ENCODE measurements at regions of chr19 and their contacts with region 1.

Region 1: DNA sequence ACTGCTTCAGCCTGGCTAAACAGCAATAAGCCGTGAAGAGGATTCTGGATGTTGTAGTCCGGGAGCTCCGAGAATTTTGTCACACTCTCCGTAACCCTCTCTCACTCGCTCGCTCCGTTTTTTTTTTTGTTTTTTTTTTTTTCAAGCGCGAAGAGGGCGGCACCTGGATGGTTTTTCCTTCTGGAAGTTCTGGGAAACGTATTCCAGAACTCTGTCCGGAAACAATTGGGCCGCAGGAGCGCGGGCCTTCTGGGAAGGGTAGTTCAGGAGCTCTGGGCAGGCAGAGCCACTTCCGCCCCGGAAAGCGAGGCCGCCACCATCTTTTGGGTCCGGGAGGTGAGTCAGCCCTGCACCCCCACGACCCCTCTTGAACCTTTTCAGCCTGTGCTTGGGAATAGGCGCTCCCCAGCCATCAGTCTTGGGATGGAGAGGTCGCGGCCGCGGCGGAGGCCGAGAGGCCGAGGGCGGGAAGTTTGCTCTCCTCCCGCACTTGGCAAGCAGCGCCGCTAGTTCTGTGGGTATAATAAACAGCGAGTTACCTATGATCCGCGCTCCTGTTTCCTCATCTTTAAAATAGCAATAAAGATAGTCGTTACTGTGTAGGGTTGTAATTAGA is at the start of gene ZNF227:
- DNase-seq: peak; percentile 69
- ATAC-seq: peak; percentile 93
- H3K4me3 Mint-ChIP-seq: peak within 1 kb of the TSS; percentile 95
- H3K27ac Mint-ChIP-seq: peak within 1 kb of the TSS; percentile 89
- H3K4me1 Mint-ChIP-seq: peaks cover 20% of the 10 kb centered on the region
- H3K27me3 Mint-ChIP-seq: no peaks in the 10 kb centered on the region
- CTCF ChIP-seq: no peak
- total RNA-seq, gene ZNF227: 33.1 and 36.9 TPM in 2 replicates

Region 2: GRCh38 chr19:43619262-43620060 is 592.9 kb before region 1 on chr19 and contains the start of gene ZNF428:
- CTCF ChIA-PET with region 1: no interaction called
- POLR2A ChIA-PET with region 1: no interaction called
- intact Hi-C with region 1: loop called (anchors 2 kb)
- DNase-seq: peak; percentile 83
- ATAC-seq: peak; percentile 87
- H3K4me3 Mint-ChIP-seq: peak within 1 kb of the TSS; percentile 94
- H3K27ac Mint-ChIP-seq: peak within 1 kb of the TSS; percentile 96
- H3K4me1 Mint-ChIP-seq: peaks cover 21% of the 10 kb centered on the region
- H3K27me3 Mint-ChIP-seq: no peaks in the 10 kb centered on the region
- CTCF ChIP-seq: no peak
- total RNA-seq, gene ZNF428: 26.2 and 29.1 TPM in 2 replicates

Region 3: GRCh38 chr19:44304659-44305193 is 92.4 kb after region 1 on chr19 and contains the start of gene ZNF235:
- CTCF ChIA-PET with region 1: no interaction called
- POLR2A ChIA-PET with region 1: interaction called, 23 read pairs
- intact Hi-C with region 1: loop called (anchors 1 kb)
- DNase-seq: peak; percentile 61
- ATAC-seq: peak; percentile 97
- H3K4me3 Mint-ChIP-seq: peak within 1 kb of the TSS; percentile 96
- H3K27ac Mint-ChIP-seq: peak within 1 kb of the TSS; percentile 76
- H3K4me1 Mint-ChIP-seq: peaks cover 20% of the 10 kb centered on the region
- H3K27me3 Mint-ChIP-seq: peaks cover 7% of the 10 kb centered on the region
- CTCF ChIP-seq: no peak
- total RNA-seq, gene ZNF235: 11.6 and 14.5 TPM in 2 replicates

Region 4: DNA sequence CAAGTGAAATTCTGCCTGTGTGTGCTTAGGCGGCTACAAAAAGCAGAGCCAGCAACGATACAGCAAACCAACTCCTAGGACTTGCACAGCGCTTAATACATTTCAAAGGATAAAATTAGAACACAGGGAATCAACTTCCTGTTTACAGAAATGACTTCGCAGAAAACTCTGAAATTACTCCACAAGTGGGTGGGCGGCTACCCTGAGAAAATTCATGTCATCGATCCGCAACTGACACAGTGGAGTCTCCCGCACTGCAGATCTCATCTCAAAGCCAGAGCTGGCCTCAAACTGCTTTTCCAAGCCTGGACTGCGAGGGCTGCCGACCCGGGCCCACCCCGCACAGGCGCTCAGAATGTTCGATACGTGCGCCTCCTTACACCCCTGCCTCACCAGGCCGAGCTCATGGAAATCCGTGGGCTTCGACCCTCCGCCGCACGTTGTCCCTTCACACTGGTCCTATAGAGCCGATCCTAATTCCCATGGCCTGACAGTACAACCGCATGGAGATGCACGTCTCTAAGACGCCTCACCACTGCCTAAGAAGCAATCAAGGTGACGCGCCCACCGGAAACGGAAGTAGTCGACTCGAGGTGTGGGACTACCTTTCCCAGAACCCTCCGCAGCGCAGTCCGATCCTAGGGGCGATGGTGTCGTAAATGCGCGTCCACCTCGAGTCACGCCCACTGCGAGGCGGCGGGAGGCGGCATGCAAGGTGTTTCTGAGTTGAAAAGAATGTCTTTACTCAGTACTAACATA is 235.7 kb after region 1 on chr19 and contains the start of gene ZNF229:
- CTCF ChIA-PET with region 1: no interaction called
- POLR2A ChIA-PET with region 1: interaction called, 3 read pairs
- intact Hi-C with region 1: loop called (anchors 5 kb)
- DNase-seq: peak; percentile 69
- ATAC-seq: peak; percentile 99
- H3K4me3 Mint-ChIP-seq: peak within 1 kb of the TSS; percentile 87
- H3K27ac Mint-ChIP-seq: peak within 1 kb of the TSS; percentile 79
- H3K4me1 Mint-ChIP-seq: peaks cover 12% of the 10 kb centered on the region
- H3K27me3 Mint-ChIP-seq: peaks cover 21% of the 10 kb centered on the region
- CTCF ChIP-seq: no peak
- total RNA-seq, gene ZNF229: 3.1 and 3.7 TPM in 2 replicates

Region 5: DNA sequence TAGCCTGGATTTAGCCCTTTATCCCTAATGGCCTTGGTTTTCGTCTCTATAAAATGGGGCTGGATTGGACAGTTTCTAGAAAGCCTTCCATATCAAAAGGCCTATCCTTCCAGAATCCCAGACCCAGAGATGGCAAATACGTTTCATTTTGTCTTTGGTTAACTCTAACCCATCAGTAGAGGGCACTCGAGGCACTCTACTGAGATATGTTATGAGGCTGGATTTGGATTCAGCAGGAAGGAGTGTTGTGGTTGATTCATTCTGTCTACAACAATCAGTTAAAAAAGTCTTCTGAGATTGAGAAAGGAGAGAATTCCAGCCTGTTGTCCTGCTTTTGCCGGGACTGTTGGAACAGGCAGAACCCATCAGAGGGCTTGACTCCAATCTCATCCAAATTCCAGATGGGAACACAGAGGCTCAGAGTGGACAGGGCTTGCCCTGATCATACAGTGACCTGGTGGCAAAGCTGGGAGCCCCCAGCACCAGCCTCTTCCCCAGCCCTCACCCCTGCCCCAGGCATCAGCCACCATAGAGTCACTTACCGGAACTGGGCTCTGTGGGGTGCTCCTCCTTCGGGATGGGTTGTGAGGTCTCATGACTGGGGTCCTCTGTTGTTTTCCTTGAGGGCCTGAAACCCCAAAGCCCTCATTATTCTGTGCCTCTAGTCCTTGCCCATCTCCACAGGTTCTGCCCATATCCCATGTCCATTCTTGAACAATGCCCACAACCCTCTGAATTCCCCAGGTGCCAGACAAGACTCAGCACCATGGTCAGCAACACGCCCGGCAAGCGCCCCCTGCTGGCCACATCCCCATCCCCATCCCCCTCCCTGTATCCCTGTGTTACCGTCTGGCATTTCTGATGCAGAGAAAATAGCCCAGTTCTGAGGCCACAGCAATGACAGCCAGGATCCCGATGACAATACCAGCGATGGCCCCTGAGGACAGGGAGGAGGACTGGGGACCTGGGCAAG is 300.3 kb after region 1 on chr19:
- CTCF ChIA-PET with region 1: no interaction called
- POLR2A ChIA-PET with region 1: no interaction called
- intact Hi-C with region 1: no loop called
- DNase-seq: no peak
- ATAC-seq: no peak
- H3K4me3 Mint-ChIP-seq: no peak overlapping the region
- H3K27ac Mint-ChIP-seq: no peak overlapping the region
- H3K4me1 Mint-ChIP-seq: no peaks in the 10 kb centered on the region
- H3K27me3 Mint-ChIP-seq: peaks cover 23% of the 10 kb centered on the region
- CTCF ChIP-seq: no peak

Measured in activated B cell treated with CpG ODN at 0.5 μM for 24 hours (primary cell).